PC-9 (cell line): ENCODE measurements at regions of chr19 and their contacts with region 1.

Region 1: GRCh38 chr19:11587302-11587974 is 9.8 kb upstream of the ZNF627 start:
- DNase-seq: peak in 1 of 2 experiments; percentile 76
- H3K4me3 ChIP-seq: no peak overlapping the region
- H3K27ac ChIP-seq: no peak overlapping the region
- H3K4me1 ChIP-seq: 0 out of 2 replicates have a peak, but pooled peaks cover 4% of the 10 kb centered on the region
- H3K27me3 ChIP-seq: no peaks in the 10 kb centered on the region
- CTCF ChIP-seq: peak; percentile 93

Region 2: GRCh38 chr19:11387162-11388034 is 200.0 kb before region 1 on chr19:
- CTCF ChIA-PET with region 1: interaction called, 15 read pairs
- POLR2A ChIA-PET with region 1: no interaction called
- intact Hi-C with region 1: no loop called
- DNase-seq: no peak
- H3K4me3 ChIP-seq: no peak overlapping the region
- H3K27ac ChIP-seq: no peak overlapping the region
- H3K4me1 ChIP-seq: peaks cover 18% of the 10 kb centered on the region
- H3K27me3 ChIP-seq: no peaks in the 10 kb centered on the region
- CTCF ChIP-seq: no peak

Region 3: DNA sequence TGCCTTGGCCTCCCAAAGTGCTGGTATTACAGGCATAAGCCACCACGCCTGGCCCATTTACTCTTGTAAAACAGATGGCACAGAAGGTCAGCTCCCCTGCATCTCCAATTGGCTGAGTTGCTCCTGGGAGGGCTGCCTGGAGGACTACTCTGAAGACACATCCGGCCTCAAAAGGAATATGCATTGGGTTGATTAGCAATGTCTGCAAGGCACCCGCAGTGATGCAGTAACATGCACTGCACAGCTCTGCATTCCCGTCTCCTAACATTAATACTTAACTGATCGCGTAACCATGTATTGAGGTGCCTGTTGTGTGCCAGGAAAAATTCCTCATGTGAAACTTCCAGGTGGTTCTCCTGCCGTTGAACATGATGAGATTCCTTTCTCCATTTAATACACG is 111.6 kb before region 1 on chr19:
- CTCF ChIA-PET with region 1: no interaction called
- POLR2A ChIA-PET with region 1: no interaction called
- intact Hi-C with region 1: no loop called
- DNase-seq: no peak
- H3K4me3 ChIP-seq: no peak overlapping the region
- H3K27ac ChIP-seq: no peak overlapping the region
- H3K4me1 ChIP-seq: no peaks in the 10 kb centered on the region
- H3K27me3 ChIP-seq: no peaks in the 10 kb centered on the region
- CTCF ChIP-seq: no peak

Region 4: DNA sequence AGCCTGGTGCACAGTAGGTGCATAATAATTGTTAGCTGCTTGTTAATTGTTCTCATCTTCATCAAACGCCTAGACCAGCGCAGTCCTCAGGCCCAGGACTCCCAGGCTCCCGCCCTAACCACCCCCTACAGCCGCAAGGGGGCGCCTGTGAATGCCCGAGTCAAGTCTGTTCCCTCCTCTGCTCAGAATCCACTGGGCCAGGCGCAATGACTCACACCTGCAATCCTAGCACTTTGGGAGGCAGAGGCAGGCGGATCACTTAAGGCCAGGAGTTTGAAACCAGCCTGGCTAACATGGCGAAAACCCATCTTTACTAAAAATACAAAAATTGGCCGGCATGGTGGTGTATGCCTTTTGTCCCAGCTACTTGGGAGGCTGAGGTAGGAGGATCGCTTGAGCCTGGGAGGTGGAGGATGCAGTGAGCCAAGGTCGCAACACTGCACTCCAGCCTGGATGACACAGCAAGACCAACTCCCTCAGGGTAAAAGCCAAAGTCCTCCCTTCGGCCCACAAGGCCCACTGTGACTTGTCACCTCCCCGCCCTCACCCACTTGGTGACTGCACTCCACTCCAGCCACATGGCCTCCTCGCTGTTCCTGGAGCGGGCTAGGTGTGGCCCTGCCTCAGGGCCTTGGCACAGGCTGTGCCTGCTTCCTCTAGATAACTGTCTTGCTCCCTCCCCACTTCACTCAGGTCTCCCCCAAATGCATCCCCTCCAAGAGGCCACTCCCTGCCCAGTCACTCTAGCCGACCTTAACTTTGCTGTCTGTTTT is 90.9 kb before region 1 on chr19:
- CTCF ChIA-PET with region 1: no interaction called
- POLR2A ChIA-PET with region 1: no interaction called
- intact Hi-C with region 1: loop called (anchors 1 kb)
- DNase-seq: peak; percentile 67 to 68
- H3K4me3 ChIP-seq: no peak overlapping the region
- H3K27ac ChIP-seq: no peak overlapping the region
- H3K4me1 ChIP-seq: no peaks in the 10 kb centered on the region
- H3K27me3 ChIP-seq: no peaks in the 10 kb centered on the region
- CTCF ChIP-seq: peak; percentile 85